ENCODE measurements at regions of chr16 and their contacts with region 1.

Region 1: GRCh38 chr16:57576429-57576870 is 34.0 kb downstream of the ADGRG5 start:
- DNase-seq: peak; percentile 68
- H3K4me3 ChIP-seq: no peak overlapping the region
- H3K27ac ChIP-seq: no peak overlapping the region
- H3K4me1 ChIP-seq: no peaks in the 10 kb centered on the region
- H3K27me3 ChIP-seq: no peaks in the 10 kb centered on the region
- CTCF ChIP-seq: peak; percentile 96 to 99
- POLR2A ChIP-seq: no peak

Region 2: DNA sequence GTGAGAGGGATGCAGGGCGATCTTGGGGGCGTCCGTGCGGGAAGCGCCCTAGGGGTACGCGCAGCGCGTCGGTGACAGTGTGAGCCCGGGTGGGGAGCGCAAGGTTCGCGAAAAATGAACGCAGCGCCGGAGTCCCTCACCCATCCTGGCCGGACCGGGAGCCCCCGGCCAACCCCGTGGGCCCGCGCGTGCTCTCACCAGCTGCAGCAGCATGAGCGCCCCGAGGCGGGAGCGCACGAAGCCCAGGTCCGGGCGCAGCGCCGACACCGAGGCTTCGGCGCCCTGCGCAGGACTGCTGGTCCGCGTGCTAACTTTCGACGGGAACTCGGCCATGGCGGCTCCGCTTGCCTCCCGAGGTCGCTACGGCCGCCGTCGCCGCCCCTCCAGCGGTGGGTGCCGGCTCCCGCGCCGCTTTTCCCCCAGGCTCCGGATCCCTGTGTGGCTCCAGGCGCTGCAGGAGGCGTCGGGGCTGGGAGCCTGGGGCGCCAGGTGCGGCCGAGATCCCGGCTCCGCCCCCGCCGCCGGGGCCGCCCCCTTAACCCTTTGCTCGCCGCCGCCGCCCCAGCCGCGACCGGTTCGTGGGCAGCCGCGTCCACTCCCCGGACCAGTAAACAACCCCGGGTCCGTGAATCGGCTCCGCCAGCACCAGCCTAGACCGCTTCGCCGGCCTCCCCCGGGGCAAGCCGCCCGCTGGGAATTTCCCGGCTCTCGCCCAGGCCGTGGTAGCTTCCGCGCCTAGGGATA is 292.1 kb before region 1 on chr16 and contains the start of gene PLLP:
- CTCF ChIA-PET with region 1: no interaction called
- POLR2A ChIA-PET with region 1: no interaction called
- dilution Hi-C with region 1: no loop called
- intact Hi-C with region 1: no loop called
- DNase-seq: peak; percentile 38
- H3K4me3 ChIP-seq: peak within 1 kb of the TSS; percentile 8 to 38 (median 16)
- H3K27ac ChIP-seq: no peak within 1 kb of the TSS
- H3K4me1 ChIP-seq: peaks cover 18% of the 10 kb centered on the region
- H3K27me3 ChIP-seq: no peaks in the 10 kb centered on the region
- CTCF ChIP-seq: no peak
- POLR2A ChIP-seq: no peak
- total RNA-seq, gene PLLP: 3.1 and 4.4 TPM in 2 replicates

Region 3: DNA sequence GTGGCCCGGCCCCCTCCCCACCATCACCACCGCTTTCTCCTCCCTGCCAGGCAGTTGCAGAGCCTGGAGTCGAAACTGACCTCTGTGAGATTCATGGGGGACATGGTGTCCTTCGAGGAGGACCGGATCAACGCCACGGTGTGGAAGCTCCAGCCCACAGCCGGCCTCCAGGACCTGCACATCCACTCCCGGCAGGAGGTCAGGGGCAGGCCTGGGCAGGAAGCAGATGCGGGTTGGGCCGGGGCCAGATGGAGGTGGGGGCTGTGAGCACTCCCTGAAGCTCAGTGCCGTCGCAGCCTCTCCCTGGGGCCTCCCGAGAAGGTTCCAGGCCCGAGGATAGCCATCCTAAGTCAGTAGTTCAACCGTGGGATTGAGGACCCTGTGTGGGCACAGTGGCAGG is 77.5 kb after region 1 on chr16:
- CTCF ChIA-PET with region 1: interaction called, 62 read pairs
- POLR2A ChIA-PET with region 1: no interaction called
- dilution Hi-C with region 1: no loop called
- intact Hi-C with region 1: loop called (anchors 1 kb)
- DNase-seq: peak; percentile 70
- H3K4me3 ChIP-seq: no peak overlapping the region
- H3K27ac ChIP-seq: peak overlapping the region; percentile 28
- H3K4me1 ChIP-seq: peaks cover 20% of the 10 kb centered on the region
- H3K27me3 ChIP-seq: no peaks in the 10 kb centered on the region
- CTCF ChIP-seq: no peak
- POLR2A ChIP-seq: no peak

Region 4: GRCh38 chr16:57720142-57720575 is 143.7 kb after region 1 on chr16:
- CTCF ChIA-PET with region 1: interaction called, 63 read pairs
- POLR2A ChIA-PET with region 1: interaction called, 3 read pairs
- dilution Hi-C with region 1: no loop called
- intact Hi-C with region 1: loop called (anchors 1 kb)
- DNase-seq: peak; percentile 53
- H3K4me3 ChIP-seq: no peak overlapping the region
- H3K27ac ChIP-seq: no peak overlapping the region
- H3K4me1 ChIP-seq: no peaks in the 10 kb centered on the region
- H3K27me3 ChIP-seq: peaks cover 0 to 6% of the 10 kb centered on the region in 2 experiments
- CTCF ChIP-seq: peak; percentile 70 to 83
- POLR2A ChIP-seq: no peak

Region 5: GRCh38 chr16:57757326-57757786 is 180.9 kb after region 1 on chr16:
- CTCF ChIA-PET with region 1: interaction called, 7 read pairs
- POLR2A ChIA-PET with region 1: no interaction called
- dilution Hi-C with region 1: no loop called
- intact Hi-C with region 1: loop called (anchors 1 kb)
- DNase-seq: peak; percentile 77
- H3K4me3 ChIP-seq: no peak overlapping the region
- H3K27ac ChIP-seq: no peak overlapping the region
- H3K4me1 ChIP-seq: no peaks in the 10 kb centered on the region
- H3K27me3 ChIP-seq: no peaks in the 10 kb centered on the region
- CTCF ChIP-seq: peak; percentile 96 to 98
- POLR2A ChIP-seq: no peak

Region 6: GRCh38 chr16:58000706-58001676 is 424.5 kb after region 1 on chr16 and contains the start of gene USB1:
- CTCF ChIA-PET with region 1: interaction called, 11 read pairs
- POLR2A ChIA-PET with region 1: no interaction called
- dilution Hi-C with region 1: no loop called
- intact Hi-C with region 1: loop called (anchors 1 kb)
- DNase-seq: peak; percentile 74
- H3K4me3 ChIP-seq: peak within 1 kb of the TSS; percentile 68 to 90 (median 85)
- H3K27ac ChIP-seq: peak within 1 kb of the TSS; percentile 19
- H3K4me1 ChIP-seq: peaks cover 17% of the 10 kb centered on the region
- H3K27me3 ChIP-seq: no peaks in the 10 kb centered on the region
- CTCF ChIP-seq: peak; percentile 63 to 73
- POLR2A ChIP-seq: peak; percentile 92
- total RNA-seq, gene USB1: 64.6 and 66.6 TPM in 2 replicates

Measured in endothelial cell of umbilical vein (primary cell).